Right cardiac atrium (tissue), 5 donors: ENCODE measurements at regions of chr9 and their contacts with region 1.

Region 1: GRCh38 chr9:134325817-134326723 is at the start of gene RXRA:
- DNase-seq: peak; percentile 90 to 96 (median 95)
- ATAC-seq: peak; percentile 67 to 71
- H3K4me3 ChIP-seq: peak within 1 kb of the TSS; percentile 94
- H3K27ac ChIP-seq: peak within 1 kb of the TSS; percentile 90
- H3K4me1 ChIP-seq: peaks cover 19% of the 10 kb centered on the region
- H3K27me3 ChIP-seq: no peaks in the 10 kb centered on the region
- total RNA-seq, gene RXRA: 48.1 to 72.3 (median 61.7) TPM

Region 2: DNA sequence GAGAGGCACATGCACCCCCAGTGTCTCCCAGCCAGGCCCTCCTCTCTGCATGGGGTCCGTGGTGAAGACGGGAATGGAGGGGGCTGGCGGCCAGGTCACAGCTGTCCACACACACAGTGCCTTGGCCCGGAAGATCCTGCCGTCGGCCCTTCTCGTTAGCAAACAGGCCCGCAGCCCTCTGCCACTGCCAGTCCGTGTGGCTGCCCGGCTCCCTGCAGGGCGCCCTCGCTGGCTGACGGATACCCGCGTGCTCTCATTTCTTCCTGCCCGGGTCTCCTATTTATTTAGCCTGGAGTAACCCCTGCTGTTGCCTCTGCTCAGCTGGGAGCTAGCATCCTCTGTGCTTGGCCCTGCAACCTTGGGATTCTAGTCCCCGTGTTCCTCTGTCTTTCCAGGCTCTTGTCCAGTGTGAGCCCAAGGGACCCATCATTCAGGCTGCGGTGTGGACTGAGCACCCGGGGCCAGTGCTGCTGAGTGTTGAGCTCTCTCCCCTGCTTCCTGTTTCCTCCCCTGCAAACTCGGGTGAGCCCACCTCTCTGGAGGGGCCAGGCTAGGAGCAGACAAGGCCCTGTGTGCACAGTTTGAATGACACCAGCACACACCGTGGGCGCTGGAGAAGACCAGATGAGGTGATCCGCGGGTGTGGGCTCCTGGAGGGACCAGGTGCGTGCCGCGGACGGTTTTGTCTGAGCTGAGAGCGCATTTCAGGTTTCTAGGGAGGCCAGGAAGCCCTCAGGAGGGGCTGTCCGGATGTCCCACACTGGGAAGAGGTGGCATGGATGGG is 147.1 kb before region 1 on chr9:
- intact Hi-C with region 1: loop called in 2 of 4 experiments (anchors 10 kb)
- DNase-seq: peak in 2 of 3 donors; percentile 73 to 77
- ATAC-seq: peak; percentile 8 to 15
- H3K4me3 ChIP-seq: no peak overlapping the region
- H3K27ac ChIP-seq: no peak overlapping the region
- H3K4me1 ChIP-seq: no peaks in the 10 kb centered on the region
- H3K27me3 ChIP-seq: no peaks in the 10 kb centered on the region

Region 3: GRCh38 chr9:134434894-134435506 is 108.9 kb after region 1 on chr9:
- intact Hi-C with region 1: loop called in 3 of 4 experiments (anchors 2 to 5 kb)
- DNase-seq: peak; percentile 98 to 99 (median 98)
- ATAC-seq: peak; percentile 83 to 85
- H3K4me3 ChIP-seq: no peak overlapping the region
- H3K27ac ChIP-seq: peak overlapping the region; percentile 91
- H3K4me1 ChIP-seq: peaks cover 15% of the 10 kb centered on the region
- H3K27me3 ChIP-seq: no peaks in the 10 kb centered on the region

Region 4: DNA sequence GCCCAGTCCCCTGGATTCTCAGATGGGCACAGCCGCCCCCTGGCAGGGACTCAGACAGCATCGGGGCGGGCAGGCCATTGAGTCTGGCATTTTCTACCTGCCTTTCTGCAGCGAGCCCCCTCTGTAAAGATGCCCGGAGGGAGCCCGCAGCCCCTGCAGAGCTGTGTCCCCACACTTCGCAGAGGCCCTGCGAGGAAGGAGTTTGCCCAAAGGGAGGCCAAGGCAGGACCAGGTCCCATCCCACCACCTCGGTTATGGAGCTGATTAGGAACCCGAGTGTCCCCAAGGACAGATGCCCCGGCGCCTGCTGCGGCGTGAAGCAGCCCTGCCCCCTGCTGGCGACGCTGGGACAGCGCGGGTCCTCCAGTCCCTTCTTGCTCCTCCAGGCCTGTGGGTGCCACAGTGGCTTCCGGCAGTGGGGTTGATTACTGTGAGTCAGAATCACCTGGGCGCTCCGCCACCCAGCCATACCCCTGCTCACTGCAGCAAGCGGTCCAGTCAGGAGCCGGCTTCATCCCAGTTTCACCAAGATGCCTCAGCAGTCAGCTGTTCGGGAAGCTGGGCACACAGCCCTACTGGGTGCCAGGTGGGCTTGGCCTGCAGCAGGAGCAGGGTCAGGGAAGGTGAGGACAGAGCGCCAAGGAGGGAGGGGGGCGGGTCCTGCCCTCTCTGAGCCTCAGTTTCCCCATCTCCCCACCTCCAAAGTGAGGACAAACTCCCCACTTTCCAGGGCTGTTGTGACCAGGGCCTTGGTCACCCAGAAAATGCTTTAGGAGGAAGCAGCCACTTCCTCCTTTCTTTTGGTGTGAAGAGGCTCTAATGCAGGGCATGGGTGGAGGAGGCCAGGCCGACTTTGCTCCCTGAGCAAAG is 117.3 kb after region 1 on chr9:
- intact Hi-C with region 1: loop called in 3 of 4 experiments (anchors 2 to 5 kb)
- DNase-seq: peak; percentile 84 to 93 (median 93)
- ATAC-seq: peak; percentile 78 to 85
- H3K4me3 ChIP-seq: no peak overlapping the region
- H3K27ac ChIP-seq: no peak overlapping the region
- H3K4me1 ChIP-seq: peaks cover 13% of the 10 kb centered on the region
- H3K27me3 ChIP-seq: no peaks in the 10 kb centered on the region